Activated CD4-positive, alpha-beta T cell treated with anti-CD3 and anti-CD28 coated beads, Interleukin-2, amount 10 ng/mL, durations not matched to agents 7 days and 5 days (primary cell): ENCODE measurements at regions of chr19 and their contacts with region 1.

Region 1: GRCh38 chr19:42132851-42133528 is 744 bp upstream of the POU2F2 start:
- DNase-seq: peak; percentile 80
- H3K4me3 Mint-ChIP-seq: peak overlapping the region; percentile 75
- H3K27ac Mint-ChIP-seq: peak overlapping the region; percentile 89
- H3K4me1 Mint-ChIP-seq: peaks cover 60% of the 10 kb centered on the region
- H3K27me3 Mint-ChIP-seq: no peaks in the 10 kb centered on the region

Region 2: GRCh38 chr19:41959056-41960053 is 173.6 kb before region 1 on chr19 and contains the start of gene RABAC1:
- CTCF ChIA-PET with region 1: no interaction called
- POLR2A ChIA-PET with region 1: no interaction called
- DNase-seq: peak; percentile 93
- H3K4me3 Mint-ChIP-seq: peak within 1 kb of the TSS; percentile 86
- H3K27ac Mint-ChIP-seq: peak within 1 kb of the TSS; percentile 91
- H3K4me1 Mint-ChIP-seq: peaks cover 20% of the 10 kb centered on the region
- H3K27me3 Mint-ChIP-seq: no peaks in the 10 kb centered on the region
- total RNA-seq, gene RABAC1: 67.4 to 74.0 TPM

Region 3: DNA sequence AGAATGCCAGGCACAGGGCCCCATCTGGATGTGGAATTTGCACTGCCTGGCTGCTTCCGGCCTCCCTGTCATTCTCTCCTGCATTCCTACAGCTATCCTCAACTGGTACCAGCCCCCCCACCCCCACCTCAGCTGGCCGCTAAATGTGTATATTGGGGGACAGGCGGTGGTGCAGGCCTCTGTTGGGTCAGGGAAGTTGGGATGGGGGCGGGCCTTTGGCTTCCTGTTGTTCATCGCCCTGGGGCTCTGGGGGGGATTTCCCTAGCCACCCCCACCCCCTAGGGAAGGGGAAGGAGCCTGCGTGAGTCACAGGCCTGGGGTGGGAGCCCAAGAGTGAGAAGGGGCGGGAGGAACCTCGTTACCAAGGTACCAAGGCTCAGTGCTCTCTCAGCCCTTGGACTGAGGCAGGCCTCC is 11.3 kb before region 1 on chr19:
- CTCF ChIA-PET with region 1: interaction called, 15 read pairs
- POLR2A ChIA-PET with region 1: no interaction called
- DNase-seq: peak; percentile 61
- H3K4me3 Mint-ChIP-seq: peak overlapping the region; percentile 45
- H3K27ac Mint-ChIP-seq: peak overlapping the region; percentile 87
- H3K4me1 Mint-ChIP-seq: peaks cover 45% of the 10 kb centered on the region
- H3K27me3 Mint-ChIP-seq: no peaks in the 10 kb centered on the region